PC-3 (cell line): ENCODE measurements at regions of chr4 and their contacts with region 1.

Region 1: DNA sequence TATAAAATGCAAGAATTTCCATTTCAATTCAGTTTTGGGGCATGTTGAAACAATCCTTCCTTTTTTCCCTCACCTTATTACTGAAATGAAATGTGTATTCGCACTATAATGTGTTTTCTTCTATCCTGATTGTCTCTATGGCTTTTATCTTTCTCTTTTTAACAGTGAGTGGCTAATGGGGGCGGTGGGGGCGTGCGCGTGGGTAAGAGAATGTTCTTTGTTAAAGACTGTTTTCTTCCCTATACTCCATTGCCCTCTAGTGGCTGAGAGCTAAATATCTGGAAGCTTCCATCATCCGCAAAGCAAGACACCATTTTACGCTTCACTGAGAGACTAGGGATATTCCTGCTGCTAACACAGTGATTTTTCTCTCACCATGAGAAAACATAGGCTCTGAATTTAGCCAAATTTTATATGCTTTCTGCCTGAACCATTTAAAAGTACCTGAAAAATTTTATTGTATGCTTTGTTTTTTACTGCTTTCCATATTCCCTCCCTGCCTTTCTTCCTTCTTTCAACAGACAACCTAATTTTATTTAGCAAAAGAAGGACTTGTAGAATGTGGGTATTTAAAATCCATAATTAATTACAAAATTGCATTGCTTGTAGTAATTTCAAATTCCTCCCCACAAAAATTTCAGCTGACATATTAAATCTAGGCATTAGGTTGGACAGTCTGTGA is 194.0 kb downstream of the GASK1B start:
- DNase-seq: peak; percentile 60
- ATAC-seq: peak; percentile 64
- H3K4me3 ChIP-seq: peak overlapping the region; percentile 44; the same call in 1 of the 2 replicates
- H3K27ac ChIP-seq: no peak overlapping the region
- H3K4me1 ChIP-seq: no peaks in the 10 kb centered on the region
- H3K27me3 ChIP-seq: no peaks in the 10 kb centered on the region
- CTCF ChIP-seq: peak; percentile 79

Region 2: GRCh38 chr4:157220371-157220881 is 758.4 kb before region 1 on chr4 and contains the start of gene GRIA2:
- CTCF ChIA-PET with region 1: no interaction called
- POLR2A ChIA-PET with region 1: no interaction called
- intact Hi-C with region 1: loop called (anchors 1 kb)
- DNase-seq: no peak
- ATAC-seq: no peak
- H3K4me3 ChIP-seq: no peak within 1 kb of the TSS
- H3K27ac ChIP-seq: no peak within 1 kb of the TSS
- H3K4me1 ChIP-seq: no peaks in the 10 kb centered on the region
- H3K27me3 ChIP-seq: peaks cover 10% of the 10 kb centered on the region; the same call in 1 of the 2 replicates
- CTCF ChIP-seq: no peak
- total RNA-seq, gene GRIA2: not detected in 2 replicates

Region 3: DNA sequence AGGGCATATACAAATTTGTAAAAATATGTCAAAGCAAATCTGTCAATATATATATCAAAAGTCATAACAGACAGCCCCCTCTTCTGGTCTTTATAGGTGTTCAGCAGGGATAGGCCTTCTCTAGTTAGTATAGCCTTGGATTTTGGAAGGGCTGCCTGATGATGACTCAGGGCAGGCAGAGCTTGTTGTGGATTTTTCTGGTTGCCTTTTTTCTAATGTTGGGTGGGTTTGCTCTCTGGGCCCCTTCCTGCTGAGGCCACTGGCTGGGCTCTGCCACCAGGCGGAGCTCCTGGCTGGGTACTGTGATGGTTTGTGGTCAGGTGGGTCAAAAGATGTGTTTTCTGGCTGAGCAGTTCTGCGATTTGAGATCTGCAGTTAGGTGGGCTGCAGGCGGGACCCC is 464.1 kb before region 1 on chr4:
- CTCF ChIA-PET with region 1: interaction called, 3 read pairs
- POLR2A ChIA-PET with region 1: no interaction called
- intact Hi-C with region 1: loop called (anchors 5 kb)
- DNase-seq: peak; percentile 2
- ATAC-seq: peak; percentile 50; the same call in 1 of the 2 replicates
- H3K4me3 ChIP-seq: no peak overlapping the region
- H3K27ac ChIP-seq: no peak overlapping the region
- H3K4me1 ChIP-seq: no peaks in the 10 kb centered on the region
- H3K27me3 ChIP-seq: no peaks in the 10 kb centered on the region
- CTCF ChIP-seq: no peak; the same call in none of the 2 replicates

Region 4: GRCh38 chr4:157840034-157840433 is 138.8 kb before region 1 on chr4:
- CTCF ChIA-PET with region 1: no interaction called
- POLR2A ChIA-PET with region 1: no interaction called
- intact Hi-C with region 1: loop called (anchors 10 kb)
- DNase-seq: no peak
- ATAC-seq: no peak
- H3K4me3 ChIP-seq: no peak overlapping the region
- H3K27ac ChIP-seq: no peak overlapping the region
- H3K4me1 ChIP-seq: no peaks in the 10 kb centered on the region
- H3K27me3 ChIP-seq: no peaks in the 10 kb centered on the region
- CTCF ChIP-seq: no peak